Lower leg skin (tissue), 4 donors: ENCODE measurements at regions of chr10 and their contacts with region 1.

Region 1: GRCh38 chr10:16699435-16700057 is 117.7 kb downstream of the RSU1 start:
- DNase-seq: no peak
- H3K4me3 ChIP-seq: no peak overlapping the region
- CTCF ChIP-seq: no peak
- POLR2A ChIP-seq: no peak

Region 2: DNA sequence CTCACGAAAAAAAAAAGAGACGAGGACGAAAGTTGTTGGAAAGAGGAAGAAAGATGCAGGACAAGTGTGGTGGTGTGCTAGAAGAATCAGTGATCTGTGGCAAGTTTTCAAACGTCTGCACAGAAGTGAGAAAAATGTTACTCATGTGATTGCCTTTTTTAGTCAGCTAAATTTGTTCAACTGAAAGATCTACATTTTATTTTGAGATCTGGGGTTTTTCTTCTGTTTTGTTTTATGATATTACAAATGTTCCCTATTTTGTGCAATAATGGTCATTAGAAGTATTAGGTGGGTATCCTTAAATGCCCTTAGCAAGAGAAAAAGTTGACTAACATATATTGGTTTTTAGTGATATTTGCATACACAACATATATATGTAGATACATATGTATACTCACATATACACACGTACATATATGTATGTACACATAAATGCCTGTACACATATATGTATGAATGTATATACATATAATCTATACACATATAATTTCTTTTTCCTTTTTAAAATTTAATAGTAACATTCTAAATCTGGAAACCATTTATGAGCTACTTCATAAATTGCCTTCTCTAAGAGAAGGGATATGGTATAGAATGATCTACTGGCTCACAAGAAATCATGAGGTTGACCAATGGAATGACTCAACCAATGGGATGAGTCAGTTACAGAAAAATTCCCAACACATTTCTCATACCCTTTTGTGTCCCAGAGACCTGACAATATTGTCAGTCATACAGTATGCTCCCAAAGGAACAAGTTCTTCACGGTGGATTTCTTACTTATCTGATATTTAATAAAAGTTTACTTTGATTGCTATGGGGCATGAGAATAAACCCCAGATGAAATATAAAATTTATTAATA is 1290.6 kb after region 1 on chr10:
- intact Hi-C with region 1: loop called (anchors 5 kb)
- DNase-seq: no peak
- H3K4me3 ChIP-seq: no peak overlapping the region
- CTCF ChIP-seq: no peak
- POLR2A ChIP-seq: no peak